Left ventricle myocardium superior (tissue), 1 donor: ENCODE measurements at regions of chr11 and their contacts with region 1.

Region 1: DNA sequence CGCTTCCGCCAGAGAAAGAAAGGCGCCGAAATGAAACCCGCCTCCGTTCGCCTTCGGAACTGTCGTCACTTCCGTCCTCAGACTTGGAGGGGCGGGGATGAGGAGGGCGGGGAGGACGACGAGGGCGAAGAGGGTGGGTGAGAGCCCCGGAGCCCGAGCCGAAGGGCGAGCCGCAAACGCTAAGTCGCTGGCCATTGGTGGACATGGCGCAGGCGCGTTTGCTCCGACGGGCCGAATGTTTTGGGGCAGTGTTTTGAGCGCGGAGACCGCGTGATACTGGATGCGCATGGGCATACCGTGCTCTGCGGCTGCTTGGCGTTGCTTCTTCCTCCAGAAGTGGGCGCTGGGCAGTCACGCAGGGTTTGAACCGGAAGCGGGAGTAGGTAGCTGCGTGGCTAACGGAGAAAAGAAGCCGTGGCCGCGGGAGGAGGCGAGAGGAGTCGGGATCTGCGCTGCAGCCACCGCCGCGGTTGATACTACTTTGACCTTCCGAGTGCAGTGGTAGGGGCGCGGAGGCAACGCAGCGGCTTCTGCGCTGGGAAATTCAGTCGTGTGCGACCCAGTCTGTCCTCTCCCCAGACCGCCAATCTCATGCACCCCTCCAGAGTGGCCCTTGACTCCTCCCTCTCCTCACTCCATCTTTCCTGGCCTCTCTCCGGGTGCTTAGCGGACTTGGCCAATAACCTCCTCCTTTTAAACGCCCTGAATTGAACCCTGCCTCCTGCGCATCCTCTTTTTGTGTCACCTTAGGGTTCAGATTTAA is at the start of gene ATM:
- DNase-seq: peak; percentile 100
- ATAC-seq: peak; percentile 98
- total RNA-seq, gene ATM: 33.3 TPM

Region 2: GRCh38 chr11:108148556-108148955 is 74.3 kb before region 1 on chr11:
- intact Hi-C with region 1: no loop called
- DNase-seq: no peak
- ATAC-seq: no peak

Region 3: GRCh38 chr11:108199446-108200321 is 23.2 kb before region 1 on chr11:
- intact Hi-C with region 1: no loop called
- DNase-seq: no peak
- ATAC-seq: peak; percentile 19

Region 4: GRCh38 chr11:108467091-108467823 is 244.4 kb after region 1 on chr11 and contains the start of gene C11orf65:
- intact Hi-C with region 1: loop called (anchors 5 kb)
- DNase-seq: peak; percentile 96
- ATAC-seq: peak; percentile 100
- total RNA-seq, gene C11orf65: 0.69 TPM